ENCODE measurements at regions of chr10 and their contacts with region 1.

Region 1: DNA sequence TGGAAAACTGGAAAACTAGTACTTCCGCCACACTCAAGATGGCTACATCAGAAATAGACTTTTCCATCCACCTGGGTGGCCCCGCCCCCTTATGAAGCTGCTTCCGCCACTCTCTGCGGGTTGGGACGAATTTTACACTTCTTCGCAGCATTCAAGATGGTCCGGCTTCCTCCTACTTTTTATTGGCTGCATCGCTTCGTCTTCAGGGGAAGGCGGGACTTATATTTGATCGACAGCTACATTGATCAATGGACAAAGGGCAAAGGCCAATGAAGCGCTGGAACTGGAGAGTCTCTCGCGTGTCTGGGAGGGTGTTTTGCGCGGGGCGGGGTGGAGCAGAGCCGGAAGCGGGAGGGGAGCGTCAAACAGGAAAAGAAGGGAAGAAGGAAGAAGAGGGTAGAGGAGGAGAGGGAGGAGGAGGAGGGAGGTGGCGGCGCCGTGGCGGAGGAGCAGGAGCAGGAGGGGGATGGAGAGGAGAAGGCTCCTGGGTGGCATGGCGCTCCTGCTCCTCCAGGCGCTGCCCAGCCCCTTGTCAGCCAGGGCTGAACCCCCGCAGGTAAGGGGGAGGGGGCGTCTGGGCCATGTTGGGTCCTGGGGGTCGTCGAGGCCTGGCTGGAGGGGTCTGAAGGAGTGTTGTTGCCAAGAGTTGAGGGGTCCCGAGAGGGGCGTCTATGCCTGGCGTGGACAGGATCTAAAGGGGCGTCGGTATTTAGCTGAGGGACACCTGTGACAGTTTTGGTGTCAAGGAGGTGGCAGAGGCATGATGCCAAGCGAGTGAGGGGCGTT is at the start of gene WBP1L:
- DNase-seq: peak; percentile 95 to 97 (median 97)
- ATAC-seq: peak; percentile 98 to 99 (median 98)
- H3K4me3 ChIP-seq: peak within 1 kb of the TSS; percentile 70 to 100 (median 96)
- H3K27ac ChIP-seq: peak within 1 kb of the TSS; percentile 70 to 95 (median 91)
- H3K4me1 ChIP-seq: peaks cover 0 to 42% (median 25%) of the 10 kb centered on the region in 12 donors
- H3K27me3 ChIP-seq: no peaks in the 10 kb centered on the region
- CTCF ChIP-seq: no peak
- POLR2A ChIP-seq: peak; percentile 13 to 84
- total RNA-seq, gene WBP1L: 18.5 to 75.1 (median 27.6) TPM

Region 2: DNA sequence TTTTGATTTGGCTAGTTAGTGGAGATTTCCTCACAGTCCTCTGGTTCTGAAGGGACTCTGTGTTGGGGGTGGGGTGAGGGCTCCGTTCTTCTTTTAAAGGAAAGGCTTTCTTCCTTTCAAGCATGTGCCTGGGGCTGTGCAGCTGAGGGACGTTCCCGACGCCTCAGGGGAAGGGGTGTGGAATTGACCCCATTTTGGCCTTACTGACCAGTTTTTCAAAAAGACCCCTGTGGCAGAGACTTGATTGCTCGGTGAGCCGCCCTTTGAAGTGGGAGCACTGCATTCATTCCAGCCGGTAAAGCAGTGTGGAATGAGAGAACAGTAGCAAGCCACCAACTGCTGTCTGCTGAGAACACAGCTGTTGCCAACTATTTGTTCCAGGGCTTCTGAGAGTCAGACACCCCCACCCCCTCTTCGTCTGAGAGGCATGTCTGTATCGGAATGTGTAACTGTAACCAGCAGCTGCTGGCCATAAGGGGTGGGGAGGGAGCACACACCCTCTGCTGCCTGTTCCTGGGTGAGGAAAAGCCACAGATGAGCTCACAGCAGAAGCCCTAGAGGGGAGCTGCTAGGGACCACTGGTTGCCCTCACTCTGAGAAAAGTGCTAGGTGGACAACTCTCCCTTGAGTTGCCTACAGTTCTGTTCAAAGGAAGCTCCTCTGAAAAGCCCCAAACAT is 33.1 kb after region 1 on chr10:
- intact Hi-C with region 1: loop called in 2 of 10 experiments (anchors 5 kb)
- DNase-seq: peak; percentile 78 to 94 (median 89)
- ATAC-seq: peak; percentile 81 to 86 (median 83)
- H3K4me3 ChIP-seq: peak overlapping the region; percentile 21 to 72 (median 60)
- H3K27ac ChIP-seq: peak overlapping the region; percentile 86 to 99 (median 96)
- H3K4me1 ChIP-seq: peaks cover 11 to 100% (median 84%) of the 10 kb centered on the region in 12 donors
- H3K27me3 ChIP-seq: no peaks in the 10 kb centered on the region
- CTCF ChIP-seq: no peak
- POLR2A ChIP-seq: peak in 1 of 2 donors; percentile 54

Region 3: DNA sequence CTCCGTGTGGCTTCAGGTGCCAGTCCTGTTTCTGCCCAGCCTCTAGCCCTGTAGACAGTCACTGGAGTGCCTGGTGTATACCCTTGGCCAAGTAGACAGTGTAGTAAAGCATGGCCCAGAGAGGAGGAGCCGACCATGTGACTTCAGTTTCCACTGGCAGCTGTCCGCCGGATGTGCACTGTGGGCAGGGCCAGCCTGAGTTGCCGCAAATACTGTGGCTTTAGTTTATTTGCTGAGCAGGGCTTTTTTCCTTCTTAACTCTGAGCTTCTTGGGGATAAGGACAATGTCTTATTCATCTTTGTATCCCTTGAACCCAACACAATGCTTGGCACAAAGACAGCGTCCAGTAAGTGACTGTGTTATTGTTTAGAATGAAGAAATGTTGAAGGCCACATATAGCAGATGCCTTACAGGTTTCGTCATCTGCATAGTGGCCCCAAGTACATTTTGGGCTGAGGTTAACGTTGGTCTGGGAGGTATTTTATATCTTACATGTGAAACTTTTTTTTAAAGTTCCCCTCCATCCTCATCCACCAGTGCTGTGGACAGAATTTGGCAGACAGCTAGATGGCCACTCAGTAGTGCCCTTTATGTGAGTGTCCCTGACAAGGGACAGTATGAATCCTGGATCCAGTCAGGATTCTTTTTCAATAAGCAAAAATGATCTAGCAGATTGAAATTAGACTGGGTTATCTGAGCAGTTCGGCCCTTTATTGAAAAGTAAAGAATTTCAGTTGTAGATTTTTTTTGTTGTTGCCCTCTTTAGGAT is 52.8 kb after region 1 on chr10:
- intact Hi-C with region 1: loop called in 3 of 10 experiments (anchors 5 to 10 kb)
- DNase-seq: peak; percentile 90 to 96 (median 92)
- ATAC-seq: peak; percentile 96 to 97 (median 96)
- H3K4me3 ChIP-seq: peak overlapping the region in 9 of 12 donors; percentile 4 to 34 (median 18)
- H3K27ac ChIP-seq: peak overlapping the region; percentile 75 to 93 (median 84)
- H3K4me1 ChIP-seq: peaks cover 20 to 99% (median 83%) of the 10 kb centered on the region in 12 donors
- H3K27me3 ChIP-seq: no peaks in the 10 kb centered on the region
- CTCF ChIP-seq: no peak
- POLR2A ChIP-seq: peak in 1 of 2 donors; percentile 63

Region 4: DNA sequence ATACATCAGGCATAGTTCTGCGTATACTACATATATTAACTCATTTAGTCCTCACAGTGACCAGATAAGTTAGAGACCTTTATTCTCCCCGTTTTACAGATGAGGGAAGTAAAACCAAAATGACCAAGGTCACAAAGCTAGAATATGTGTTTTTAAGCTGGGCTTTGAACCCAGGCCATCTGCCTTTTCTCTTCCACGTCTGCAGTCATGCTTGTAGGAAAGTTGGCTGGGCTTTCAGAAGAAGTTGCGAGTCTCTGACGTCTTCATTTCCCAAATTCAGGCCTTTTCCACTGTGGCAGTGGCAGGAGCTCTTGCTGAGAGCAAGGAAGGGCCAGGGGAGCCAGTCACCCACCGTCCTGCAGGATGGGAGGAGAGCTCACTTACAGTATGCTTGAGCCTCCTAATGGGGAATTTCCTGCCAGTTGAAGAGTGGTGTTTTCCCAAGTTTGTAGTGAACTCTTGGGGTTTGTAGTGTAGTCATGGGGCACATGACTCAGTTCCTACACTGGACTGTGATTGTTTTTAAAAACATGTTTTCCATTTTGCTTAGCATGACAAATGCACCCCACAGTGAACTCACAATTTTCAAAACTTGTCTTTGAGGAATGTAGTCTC is 59.2 kb after region 1 on chr10:
- intact Hi-C with region 1: loop called in 4 of 10 experiments (anchors 5 to 10 kb)
- DNase-seq: peak in 3 of 5 donors; percentile 54 to 65 (median 61)
- ATAC-seq: peak in 3 of 4 donors; percentile 52 to 77 (median 62)
- H3K4me3 ChIP-seq: no peak overlapping the region
- H3K27ac ChIP-seq: peak overlapping the region; percentile 19 to 93 (median 76)
- H3K4me1 ChIP-seq: peaks cover 17 to 61% (median 50%) of the 10 kb centered on the region in 12 donors
- H3K27me3 ChIP-seq: no peaks in the 10 kb centered on the region
- CTCF ChIP-seq: no peak
- POLR2A ChIP-seq: no peak

Region 5: DNA sequence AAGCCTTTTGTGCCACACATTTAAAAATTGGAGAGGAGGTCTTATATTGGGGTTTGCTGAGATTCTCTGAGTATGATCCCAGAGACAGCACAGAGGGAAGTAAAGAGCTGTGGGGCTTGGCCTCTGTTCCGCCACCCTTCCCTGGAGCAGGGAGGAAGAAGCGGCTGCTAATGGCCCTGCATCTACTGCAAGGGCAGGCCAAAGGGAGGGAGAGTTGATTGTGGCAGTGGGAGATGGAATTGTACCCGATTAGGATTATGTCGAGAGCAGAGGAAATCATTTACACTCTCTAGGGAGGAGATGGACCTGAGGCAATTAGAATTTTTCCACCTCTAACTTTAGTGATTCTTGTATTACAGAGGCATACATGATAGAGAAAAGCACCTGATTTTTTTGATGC is 64.6 kb after region 1 on chr10:
- intact Hi-C with region 1: loop called in 3 of 10 experiments (anchors 5 to 10 kb)
- DNase-seq: no peak
- ATAC-seq: no peak
- H3K4me3 ChIP-seq: no peak overlapping the region
- H3K27ac ChIP-seq: peak overlapping the region in 1 of 12 donors; percentile 58
- H3K4me1 ChIP-seq: peaks cover 0 to 48% (median 14%) of the 10 kb centered on the region in 12 donors
- H3K27me3 ChIP-seq: no peaks in the 10 kb centered on the region
- CTCF ChIP-seq: no peak
- POLR2A ChIP-seq: no peak

Region 6: DNA sequence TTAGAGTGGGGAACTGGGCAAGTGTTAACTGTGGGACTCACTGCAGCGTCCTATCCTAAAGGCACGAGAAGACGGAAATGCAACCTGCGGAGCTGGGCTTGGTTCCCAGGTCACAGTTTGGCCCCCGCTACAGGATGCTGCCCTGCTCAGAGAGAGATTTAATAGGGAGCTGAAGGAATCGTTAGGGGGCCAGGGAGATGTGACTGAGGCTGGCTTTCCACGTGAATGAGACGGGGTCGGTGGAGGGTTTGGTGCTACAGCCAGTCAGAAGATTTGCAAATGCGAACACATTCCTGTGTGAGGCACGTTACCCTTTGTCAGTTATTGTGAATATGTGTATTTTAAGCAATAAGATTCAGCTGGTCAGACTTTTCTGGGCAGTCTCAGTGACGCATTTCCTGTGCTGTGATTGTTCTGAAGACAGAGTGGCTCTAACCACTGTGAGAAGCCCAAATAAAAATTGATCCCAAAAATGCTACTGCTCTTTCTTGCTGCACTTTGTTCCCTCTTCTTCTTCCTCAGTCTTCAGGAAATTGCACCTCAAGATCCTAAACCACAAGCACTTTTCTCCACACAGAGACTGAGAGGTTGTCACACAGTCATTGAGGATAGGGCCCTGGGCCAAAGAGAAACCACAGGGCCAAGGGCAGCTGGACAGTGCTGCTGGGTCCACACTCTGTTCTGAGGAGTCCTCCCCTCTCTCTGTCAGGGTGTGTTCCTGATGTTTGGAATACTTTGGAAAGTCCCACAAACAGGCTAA is 72.2 kb after region 1 on chr10:
- intact Hi-C with region 1: loop called in 4 of 10 experiments (anchors 5 to 10 kb)
- DNase-seq: peak in 4 of 5 donors; percentile 63 to 73 (median 69)
- ATAC-seq: peak; percentile 59 to 77 (median 74)
- H3K4me3 ChIP-seq: peak overlapping the region in 4 of 12 donors; percentile 1 to 20 (median 9)
- H3K27ac ChIP-seq: peak overlapping the region; percentile 81 to 98 (median 88)
- H3K4me1 ChIP-seq: peaks cover 6 to 80% (median 42%) of the 10 kb centered on the region in 12 donors
- H3K27me3 ChIP-seq: no peaks in the 10 kb centered on the region
- CTCF ChIP-seq: no peak
- POLR2A ChIP-seq: peak in 1 of 2 donors; percentile 14

Region 7: GRCh38 chr10:102824664-102825063 is 80.9 kb after region 1 on chr10:
- intact Hi-C with region 1: loop called in 5 of 10 experiments (anchors 5 to 10 kb)
- DNase-seq: no peak
- ATAC-seq: no peak
- H3K4me3 ChIP-seq: no peak overlapping the region
- H3K27ac ChIP-seq: no peak overlapping the region
- H3K4me1 ChIP-seq: peaks cover 0 to 4% (median 0%) of the 10 kb centered on the region in 12 donors
- H3K27me3 ChIP-seq: no peaks in the 10 kb centered on the region
- CTCF ChIP-seq: no peak
- POLR2A ChIP-seq: no peak

Region 8: DNA sequence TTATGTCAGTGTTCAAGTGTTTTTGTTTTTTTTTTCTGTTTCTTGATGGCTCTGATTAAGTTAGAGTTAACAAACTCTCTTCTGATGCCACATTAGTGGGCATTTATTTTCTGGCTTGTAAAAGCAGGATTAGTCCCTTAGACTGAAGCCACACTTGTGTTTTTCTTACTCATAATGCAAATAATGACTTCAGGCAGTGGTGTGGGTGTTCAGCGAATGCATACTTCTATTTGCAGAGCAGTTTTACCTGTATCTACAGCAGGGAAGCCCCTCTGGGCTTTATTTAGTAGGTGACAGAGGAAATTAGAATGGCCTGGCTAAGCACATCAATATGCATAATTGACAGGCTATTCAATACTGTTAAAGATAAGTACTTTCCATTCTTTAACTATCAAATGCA is 254.2 kb after region 1 on chr10:
- intact Hi-C with region 1: no loop called
- DNase-seq: no peak
- ATAC-seq: no peak
- H3K4me3 ChIP-seq: no peak overlapping the region
- H3K27ac ChIP-seq: no peak overlapping the region
- H3K4me1 ChIP-seq: peaks cover 0 to 6% (median 0%) of the 10 kb centered on the region in 12 donors
- H3K27me3 ChIP-seq: no peaks in the 10 kb centered on the region
- CTCF ChIP-seq: no peak
- POLR2A ChIP-seq: no peak

Region 9: DNA sequence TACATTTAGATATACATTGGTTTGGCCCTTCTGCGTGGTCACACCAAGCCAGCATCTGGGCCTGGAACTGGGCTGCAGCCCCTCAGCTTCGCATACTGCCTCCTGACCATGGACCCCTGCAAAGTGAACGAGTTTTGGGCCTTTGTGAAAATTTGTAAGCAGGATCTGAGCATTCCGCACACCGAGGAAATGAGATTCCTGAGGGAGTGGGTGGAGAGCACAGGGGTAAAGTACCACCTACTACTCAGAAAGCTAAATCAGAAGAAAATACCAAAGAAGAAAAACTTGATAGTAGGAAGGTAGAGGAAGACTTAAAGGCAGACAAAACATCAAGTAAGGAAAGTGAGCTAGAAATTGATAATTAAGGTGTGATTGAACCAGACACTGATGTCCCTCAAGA is 471.8 kb after region 1 on chr10:
- intact Hi-C with region 1: no loop called
- DNase-seq: no peak
- ATAC-seq: no peak
- H3K4me3 ChIP-seq: no peak overlapping the region
- H3K27ac ChIP-seq: no peak overlapping the region
- H3K4me1 ChIP-seq: no peaks in the 10 kb centered on the region
- H3K27me3 ChIP-seq: no peaks in the 10 kb centered on the region
- CTCF ChIP-seq: no peak
- POLR2A ChIP-seq: no peak

Region 10: DNA sequence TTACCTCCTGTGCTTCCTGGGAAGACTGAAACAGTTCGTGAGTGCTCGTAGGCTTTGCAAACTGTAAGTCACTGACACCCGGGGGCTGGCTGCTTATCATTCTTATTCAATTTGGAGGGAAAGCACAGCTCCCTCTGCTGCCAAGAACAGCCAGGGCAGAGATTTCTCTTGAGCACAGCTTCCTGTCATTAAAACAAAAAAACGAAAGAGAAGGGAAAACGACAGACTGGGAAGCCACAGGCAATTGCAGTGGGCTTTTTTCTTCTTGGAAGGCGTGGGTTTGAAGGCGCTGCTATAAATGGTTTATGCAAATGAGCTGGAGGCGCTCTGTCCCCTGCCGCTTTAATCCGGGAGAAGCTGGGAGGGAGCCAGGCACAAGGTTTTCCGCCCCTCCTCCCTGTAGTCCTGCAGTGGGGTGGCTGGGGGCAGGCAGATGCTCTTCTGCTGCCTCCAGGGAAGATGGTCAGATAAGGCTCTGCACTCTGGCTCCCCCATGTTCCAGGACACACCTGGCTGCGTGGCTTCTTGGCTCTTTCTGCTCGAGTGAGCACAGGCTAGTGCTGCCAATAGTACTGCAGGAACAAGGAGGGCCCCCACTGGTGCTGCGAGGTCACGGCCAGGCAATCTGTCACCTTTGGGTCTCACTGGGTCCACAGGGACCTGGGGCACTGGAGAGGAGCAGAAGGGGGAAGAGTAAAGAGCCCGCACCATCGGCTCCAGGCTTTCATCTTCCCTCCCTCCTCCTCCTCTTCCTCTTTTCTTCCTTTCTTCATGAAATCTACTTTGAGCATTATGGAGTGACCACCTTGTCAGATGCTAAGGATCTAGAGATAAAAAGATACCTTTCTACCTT is 799.2 kb after region 1 on chr10:
- intact Hi-C with region 1: no loop called
- DNase-seq: peak in 2 of 5 donors; percentile 38 to 49
- ATAC-seq: peak; percentile 40 to 72 (median 52)
- H3K4me3 ChIP-seq: peak overlapping the region in 10 of 12 donors; percentile 23 to 53 (median 40)
- H3K27ac ChIP-seq: peak overlapping the region in 1 of 12 donors; percentile 6
- H3K4me1 ChIP-seq: peaks cover 0 to 20% (median 12%) of the 10 kb centered on the region in 12 donors
- H3K27me3 ChIP-seq: peaks cover 0 to 7% (median 0%) of the 10 kb centered on the region in 9 donors
- CTCF ChIP-seq: peak in 11 of 12 donors; percentile 16 to 63 (median 42)
- POLR2A ChIP-seq: no peak